ENCODE measurements at regions of chr10 and their contacts with region 1.

Region 1: GRCh38 chr10:103564776-103565520 is 71.4 kb downstream of the NEURL1 start:
- DNase-seq: peak; percentile 25
- H3K4me3 Mint-ChIP-seq: no peak overlapping the region
- H3K27ac Mint-ChIP-seq: no peak overlapping the region
- H3K4me1 Mint-ChIP-seq: no peaks in the 10 kb centered on the region
- H3K27me3 Mint-ChIP-seq: peaks cover 15% of the 10 kb centered on the region

Region 2: DNA sequence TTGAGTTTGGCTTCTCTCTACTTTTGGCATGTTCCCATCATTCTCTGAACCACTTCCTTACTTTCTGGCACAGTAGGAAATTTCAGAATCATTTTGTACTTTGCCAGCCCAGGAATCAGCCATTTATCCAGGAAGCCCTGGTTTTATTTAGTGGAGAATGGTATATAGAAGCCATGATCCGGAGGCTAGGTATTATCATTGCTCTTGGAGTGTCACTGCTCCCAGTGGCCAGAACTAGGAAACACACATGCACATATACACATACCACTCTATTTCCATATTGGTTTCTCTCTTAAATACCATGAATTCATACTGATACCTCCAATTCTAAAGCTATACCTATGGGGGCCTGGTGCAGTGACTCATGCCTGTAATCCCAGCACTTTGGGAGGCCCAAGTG is 1024.9 kb before region 1 on chr10:
- intact Hi-C with region 1: no loop called
- DNase-seq: no peak
- H3K4me3 Mint-ChIP-seq: no peak overlapping the region
- H3K27ac Mint-ChIP-seq: no peak overlapping the region
- H3K4me1 Mint-ChIP-seq: peaks cover 7% of the 10 kb centered on the region
- H3K27me3 Mint-ChIP-seq: no peaks in the 10 kb centered on the region

Region 3: DNA sequence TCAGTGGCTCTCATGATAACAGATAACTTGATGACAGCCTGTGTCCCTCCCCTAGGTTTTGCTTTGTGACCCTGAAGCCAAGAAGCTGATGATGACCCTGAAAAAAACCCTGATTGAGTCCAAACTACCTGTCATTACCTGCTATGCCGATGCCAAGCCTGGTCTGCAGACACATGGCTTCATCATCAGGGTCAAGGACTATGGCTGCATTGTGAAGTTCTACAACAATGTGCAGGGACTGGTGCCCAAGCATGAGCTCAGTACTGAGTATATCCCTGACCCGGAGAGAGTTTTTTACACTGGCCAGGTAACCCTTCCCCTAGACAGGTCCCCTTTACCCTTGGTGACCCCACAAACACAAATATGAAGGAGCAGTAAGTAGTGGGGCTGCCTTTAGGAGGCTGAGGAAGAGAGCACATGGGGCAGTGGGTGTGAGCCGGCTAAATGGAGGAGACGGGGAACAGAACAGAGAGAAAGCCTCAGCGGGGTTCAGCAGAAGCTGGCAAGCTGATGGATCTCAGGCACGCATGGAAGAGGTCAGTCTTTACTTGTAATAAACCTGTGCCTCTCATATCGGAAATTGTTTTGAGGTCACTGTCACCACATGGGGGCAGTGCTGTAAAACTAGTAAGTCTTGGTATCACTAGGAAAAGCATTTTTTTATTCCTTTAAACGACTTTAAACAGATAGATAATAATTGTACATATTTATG is 148.4 kb before region 1 on chr10:
- intact Hi-C with region 1: loop called (anchors 10 kb)
- DNase-seq: peak; percentile 39
- H3K4me3 Mint-ChIP-seq: no peak overlapping the region
- H3K27ac Mint-ChIP-seq: no peak overlapping the region
- H3K4me1 Mint-ChIP-seq: peaks cover 10% of the 10 kb centered on the region
- H3K27me3 Mint-ChIP-seq: no peaks in the 10 kb centered on the region

Region 4: DNA sequence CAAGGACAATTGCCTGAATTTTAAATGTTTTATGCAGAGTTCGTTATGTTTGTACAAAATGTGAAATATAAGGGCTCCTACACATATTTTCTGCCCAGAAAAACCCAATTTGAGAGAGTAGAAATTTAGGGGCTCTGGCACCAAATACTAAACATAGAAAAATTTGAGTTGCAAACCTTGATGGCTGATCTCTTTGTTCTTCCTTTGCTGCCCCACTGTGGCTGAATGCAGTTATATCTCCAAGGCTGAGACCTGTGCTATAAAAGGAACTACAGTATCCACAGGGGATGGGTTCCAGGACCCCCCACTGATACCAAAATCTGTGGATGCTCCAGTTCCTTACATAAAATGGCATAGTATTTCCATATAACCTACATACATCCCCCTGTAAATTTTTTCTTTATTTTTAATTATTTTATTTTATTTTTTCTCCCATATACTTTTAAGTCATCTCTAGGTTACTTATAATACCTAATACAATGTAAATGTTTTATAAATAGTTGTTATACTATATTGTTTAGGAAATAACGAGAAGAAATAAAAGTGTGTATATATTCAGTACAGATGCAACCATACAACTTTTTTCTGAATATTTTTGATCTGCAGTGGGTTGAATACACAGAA is 644.7 kb after region 1 on chr10:
- intact Hi-C with region 1: no loop called
- DNase-seq: no peak
- H3K4me3 Mint-ChIP-seq: no peak overlapping the region
- H3K27ac Mint-ChIP-seq: no peak overlapping the region
- H3K4me1 Mint-ChIP-seq: no peaks in the 10 kb centered on the region
- H3K27me3 Mint-ChIP-seq: peaks cover 29% of the 10 kb centered on the region

Measured in activated T-helper 1 cell treated with anti-CD3 and anti-CD28 coated beads, Interleukin-12 subunit alpha, Interleukin-12 subunit beta, Interleukin-2, Interleukin-4 antibody, amounts not matched to agents 30 ng/mL and 10 ng/mL and 1 ng/mL, durations not matched to agents 14 hours and 24 hours and 36 hours (primary cell).